Activated CD4-positive, alpha-beta memory T cell treated with anti-CD3 and anti-CD28 coated beads, Interleukin-2, amount 10 ng/mL, durations not matched to agents 7 days and 5 days (primary cell): ENCODE measurements at regions of chr3 and their contacts with region 1.

Region 1: DNA sequence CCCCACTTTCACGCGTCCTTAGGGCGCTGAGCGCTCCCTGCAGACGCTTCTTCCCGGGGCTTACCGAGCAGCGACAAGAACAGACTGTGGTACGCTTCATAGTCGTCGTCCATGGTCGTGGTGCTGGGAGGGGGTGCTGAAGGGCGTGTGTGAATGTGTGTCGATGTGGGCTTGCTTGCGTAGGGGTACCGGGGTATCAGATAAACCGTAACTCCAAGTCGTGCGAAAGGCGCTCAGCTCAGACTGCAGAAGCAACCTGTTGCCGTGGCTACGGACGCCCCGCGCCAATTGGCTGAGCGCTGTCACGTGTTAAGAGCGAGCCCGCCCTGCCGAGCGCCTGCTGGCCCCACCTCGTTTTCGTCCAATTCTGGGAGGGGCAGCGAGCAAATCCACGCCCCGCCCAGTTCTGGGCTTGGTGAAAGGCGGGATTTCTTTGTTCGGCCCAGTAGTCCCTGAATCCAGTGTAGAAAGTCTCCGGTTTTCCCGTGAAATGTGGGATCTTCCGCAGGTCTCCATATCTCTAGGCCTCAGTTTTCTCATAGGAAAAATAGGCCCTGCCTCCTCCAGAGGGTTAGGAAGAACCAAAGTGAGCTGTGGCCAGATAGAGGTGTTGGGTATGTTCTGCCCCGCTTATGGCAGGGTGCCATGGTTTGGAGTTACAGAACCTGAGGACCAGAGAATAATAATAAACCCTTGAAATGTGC is at the start of gene EFCAB12:
- DNase-seq: peak; percentile 91
- H3K4me3 Mint-ChIP-seq: peak within 1 kb of the TSS; percentile 22
- H3K27ac Mint-ChIP-seq: no peak within 1 kb of the TSS
- H3K4me1 Mint-ChIP-seq: peaks cover 50% of the 10 kb centered on the region
- H3K27me3 Mint-ChIP-seq: peaks cover 5% of the 10 kb centered on the region
- total RNA-seq, gene EFCAB12: 0.65 to 0.98 TPM

Region 2: GRCh38 chr3:129439817-129440617 is 11.5 kb after region 1 on chr3 and contains the starts of genes IFT122 and MBD4:
- CTCF ChIA-PET with region 1: interaction called, 4 read pairs
- POLR2A ChIA-PET with region 1: interaction called, 46 read pairs
- DNase-seq: peak; percentile 100
- H3K4me3 Mint-ChIP-seq: peak within 1 kb of the TSS; percentile 87
- H3K27ac Mint-ChIP-seq: peak within 1 kb of the TSS; percentile 94
- H3K4me1 Mint-ChIP-seq: peaks cover 66% of the 10 kb centered on the region
- H3K27me3 Mint-ChIP-seq: no peaks in the 10 kb centered on the region
- total RNA-seq, gene IFT122: 22.6 to 22.8 TPM
- total RNA-seq, gene MBD4: 47.1 to 47.4 TPM